Activated naive CD4-positive, alpha-beta T cell treated with anti-CD3 and anti-CD28 coated beads for 36 hours (primary cell): ENCODE measurements at regions of chr3 and their contacts with region 1.

Region 1: DNA sequence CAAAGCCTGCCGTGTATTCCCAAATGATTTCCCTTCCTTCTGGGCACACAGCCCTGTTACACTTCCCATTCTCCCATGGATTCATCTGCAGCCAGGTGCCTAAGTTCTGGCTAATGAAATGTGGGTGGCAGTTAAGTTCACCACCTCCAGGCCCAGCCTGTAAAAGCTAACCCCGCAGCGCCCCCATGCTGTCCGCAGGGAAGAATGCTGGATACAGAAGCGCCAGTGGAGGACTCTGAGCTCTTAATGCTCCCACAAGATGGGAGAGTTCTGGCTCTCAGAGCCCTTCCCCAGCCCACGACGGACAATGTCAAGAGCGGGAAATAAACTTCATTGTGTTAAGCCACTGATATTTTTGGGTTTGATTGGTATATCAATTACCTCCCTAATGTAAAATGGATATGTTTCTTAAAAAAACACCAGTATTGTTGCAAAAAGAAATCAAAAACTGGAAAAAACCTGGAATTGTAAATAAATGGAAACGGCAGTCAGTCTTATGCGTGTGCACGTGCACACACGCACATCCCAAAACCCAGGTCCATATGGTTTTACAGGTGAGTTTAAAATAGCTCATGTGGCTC is 37.7 kb upstream of the FGD5 start:
- DNase-seq: peak; percentile 64
- H3K4me3 Mint-ChIP-seq: no peak overlapping the region
- H3K27ac Mint-ChIP-seq: no peak overlapping the region
- H3K4me1 Mint-ChIP-seq: no peaks in the 10 kb centered on the region
- H3K27me3 Mint-ChIP-seq: peaks cover 3% of the 10 kb centered on the region

Region 2: DNA sequence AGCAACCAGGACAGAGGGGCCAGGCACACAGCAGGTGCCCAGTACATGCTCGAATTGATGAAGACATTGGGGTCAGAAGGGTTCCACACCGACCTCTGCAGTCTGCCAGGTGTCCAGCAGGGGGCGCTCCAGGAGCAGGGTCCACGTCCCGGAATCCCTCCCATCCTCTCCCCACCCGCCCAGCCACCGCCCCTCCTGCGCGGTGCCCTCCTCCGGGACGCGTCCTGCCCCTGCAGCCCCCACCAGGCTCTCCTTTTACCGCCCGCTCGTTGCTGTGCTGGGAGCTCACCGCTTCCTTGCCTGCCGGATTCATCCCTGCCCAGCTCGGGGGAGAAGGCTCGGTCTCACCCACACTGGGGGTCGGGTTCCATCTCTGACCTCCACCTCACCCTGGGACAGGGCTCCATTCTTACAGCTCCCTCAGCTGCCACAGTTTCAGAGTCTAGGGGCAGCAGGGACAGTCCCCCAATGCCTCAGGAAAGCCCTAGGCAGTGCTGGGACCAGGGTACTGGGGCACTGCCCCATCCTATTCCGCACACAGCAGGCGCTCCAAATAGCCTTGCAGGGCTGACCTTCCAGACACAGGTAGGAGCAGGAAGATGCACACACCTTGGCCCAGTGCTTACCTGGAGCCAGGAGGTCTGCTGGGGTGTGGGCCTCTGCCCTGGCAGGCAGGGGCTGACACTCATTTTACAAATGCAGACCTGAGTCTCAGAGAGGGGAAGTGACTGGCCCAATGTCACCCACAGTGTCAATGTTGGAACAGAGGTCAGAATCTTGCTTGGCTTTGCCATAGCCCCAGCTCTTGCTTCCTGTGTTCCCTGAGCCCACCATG is 271.8 kb before region 1 on chr3:
- CTCF ChIA-PET with region 1: no interaction called
- intact Hi-C with region 1: loop called (anchors 2 kb)
- DNase-seq: peak; percentile 82
- H3K4me3 Mint-ChIP-seq: no peak overlapping the region
- H3K27ac Mint-ChIP-seq: no peak overlapping the region
- H3K4me1 Mint-ChIP-seq: peaks cover 5% of the 10 kb centered on the region
- H3K27me3 Mint-ChIP-seq: no peaks in the 10 kb centered on the region

Region 3: DNA sequence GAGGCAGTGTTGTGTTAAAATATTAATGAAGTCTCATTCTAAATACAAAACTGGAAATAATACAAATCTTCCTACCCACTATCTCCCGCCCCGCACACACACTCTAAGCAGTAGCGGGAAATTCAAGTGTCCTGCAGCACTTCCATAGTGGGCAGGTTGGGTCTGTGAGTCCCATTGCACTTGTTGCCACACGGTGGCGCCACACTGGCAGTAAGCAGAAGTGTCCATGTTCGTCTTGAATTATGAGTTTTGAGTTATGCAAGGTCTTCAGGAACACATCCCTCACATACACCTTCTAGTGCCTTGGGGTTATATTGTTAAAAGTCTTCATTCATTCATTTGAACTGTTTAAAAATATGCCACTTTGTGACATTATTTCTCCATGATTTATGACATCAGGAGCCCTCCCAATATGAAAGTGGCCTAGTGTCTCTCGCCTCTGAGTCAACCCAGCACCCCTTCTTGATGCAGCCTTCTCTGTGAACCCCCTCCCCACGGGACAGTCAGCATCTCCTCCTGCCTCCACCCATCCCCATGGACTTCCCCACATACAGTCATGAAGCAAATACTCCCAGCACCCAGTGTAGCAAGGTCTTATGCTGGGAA is 147.1 kb before region 1 on chr3:
- CTCF ChIA-PET with region 1: interaction called, 5 read pairs
- intact Hi-C with region 1: loop called (anchors 2 kb)
- DNase-seq: peak; percentile 72
- H3K4me3 Mint-ChIP-seq: no peak overlapping the region
- H3K27ac Mint-ChIP-seq: no peak overlapping the region
- H3K4me1 Mint-ChIP-seq: no peaks in the 10 kb centered on the region
- H3K27me3 Mint-ChIP-seq: peaks cover 29% of the 10 kb centered on the region

Region 4: DNA sequence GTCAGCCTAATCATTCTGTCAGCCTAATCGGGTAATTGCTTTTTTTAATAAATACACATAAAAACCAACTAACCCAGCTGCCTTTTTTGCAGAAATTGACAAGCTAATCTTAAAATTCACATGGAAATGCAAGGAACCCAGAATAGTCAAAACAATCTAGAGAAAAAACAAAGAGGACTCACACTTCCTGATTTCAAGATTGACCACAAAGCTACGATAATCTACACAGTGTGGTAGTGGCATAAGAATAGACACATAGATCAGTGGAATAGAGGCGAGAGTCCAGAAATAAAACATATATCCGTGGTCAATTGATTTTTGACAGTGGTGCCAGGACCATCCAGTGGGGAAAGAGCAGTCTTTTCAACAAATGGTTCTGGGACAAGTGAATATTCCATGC is 108.4 kb before region 1 on chr3:
- CTCF ChIA-PET with region 1: interaction called, 10 read pairs
- intact Hi-C with region 1: loop called (anchors 1 kb)
- DNase-seq: no peak
- H3K4me3 Mint-ChIP-seq: no peak overlapping the region
- H3K27ac Mint-ChIP-seq: no peak overlapping the region
- H3K4me1 Mint-ChIP-seq: no peaks in the 10 kb centered on the region
- H3K27me3 Mint-ChIP-seq: no peaks in the 10 kb centered on the region

Region 5: DNA sequence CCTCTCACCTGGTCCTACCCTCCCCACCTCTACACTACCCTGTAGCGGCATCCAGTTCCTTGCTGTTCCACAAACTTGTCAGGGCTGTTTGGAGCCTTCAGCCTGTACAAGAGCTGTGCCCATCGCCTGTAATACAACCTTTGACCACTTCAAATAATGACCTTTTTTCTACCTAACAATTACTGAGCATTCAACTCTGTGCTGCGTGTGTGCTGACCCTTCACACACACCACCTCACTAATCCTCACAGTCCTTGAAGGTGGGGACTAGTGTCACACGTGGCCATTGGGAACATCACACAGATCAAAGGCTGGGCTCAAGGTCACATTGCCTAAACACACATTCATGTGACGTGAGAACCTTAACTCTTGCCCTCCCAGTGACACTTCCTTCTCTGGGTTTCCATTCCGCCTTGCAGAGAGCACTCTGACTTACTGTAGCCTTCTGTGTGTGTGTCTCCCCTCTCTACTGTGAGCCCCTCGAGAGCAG is 103.0 kb before region 1 on chr3:
- CTCF ChIA-PET with region 1: interaction called, 10 read pairs
- intact Hi-C with region 1: loop called (anchors 1 kb)
- DNase-seq: no peak
- H3K4me3 Mint-ChIP-seq: no peak overlapping the region
- H3K27ac Mint-ChIP-seq: no peak overlapping the region
- H3K4me1 Mint-ChIP-seq: no peaks in the 10 kb centered on the region
- H3K27me3 Mint-ChIP-seq: no peaks in the 10 kb centered on the region

Region 6: DNA sequence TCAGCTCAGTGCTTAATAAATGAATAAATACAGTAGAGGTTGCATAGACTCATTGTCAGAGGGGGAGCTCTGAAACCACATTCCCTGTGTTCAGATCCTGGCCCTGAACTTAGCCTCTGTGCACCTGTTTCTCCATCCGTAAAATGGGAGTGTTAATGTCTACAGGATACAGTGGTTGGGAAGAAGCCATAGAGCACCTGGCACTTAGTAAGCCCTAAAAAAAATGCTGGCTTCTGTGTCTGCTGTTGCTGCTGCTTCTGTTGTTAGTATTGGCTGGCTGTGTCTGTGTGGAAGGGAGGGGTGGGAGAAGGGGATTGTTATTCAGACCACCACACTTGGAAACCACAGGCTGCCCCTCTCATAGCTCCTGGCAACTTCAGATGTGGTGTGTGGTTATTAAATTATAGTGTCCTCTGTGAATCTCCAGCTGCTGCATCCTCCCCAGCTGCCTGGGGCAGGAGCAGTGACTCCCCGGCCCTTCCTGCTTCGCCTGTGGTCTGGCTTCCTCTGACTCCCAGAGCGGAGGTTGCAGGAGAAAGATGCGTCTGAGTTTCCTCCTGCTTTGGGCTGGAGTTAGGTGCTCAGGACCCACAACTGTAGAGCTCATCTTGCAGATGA is 68.7 kb after region 1 on chr3:
- CTCF ChIA-PET with region 1: no interaction called
- intact Hi-C with region 1: loop called (anchors 1 kb)
- DNase-seq: no peak
- H3K4me3 Mint-ChIP-seq: no peak overlapping the region
- H3K27ac Mint-ChIP-seq: no peak overlapping the region
- H3K4me1 Mint-ChIP-seq: peaks cover 9% of the 10 kb centered on the region
- H3K27me3 Mint-ChIP-seq: peaks cover 2% of the 10 kb centered on the region

Region 7: GRCh38 chr3:14894085-14894484 is 113.1 kb after region 1 on chr3:
- CTCF ChIA-PET with region 1: no interaction called
- intact Hi-C with region 1: no loop called
- DNase-seq: no peak
- H3K4me3 Mint-ChIP-seq: no peak overlapping the region
- H3K27ac Mint-ChIP-seq: no peak overlapping the region
- H3K4me1 Mint-ChIP-seq: no peaks in the 10 kb centered on the region
- H3K27me3 Mint-ChIP-seq: no peaks in the 10 kb centered on the region